SK-N-SH (cell line): ENCODE measurements at regions of chr19 and their contacts with region 1.

Region 1: GRCh38 chr19:55407800-55408532 is 378 bp upstream of the UBE2S start:
- DNase-seq: peak; percentile 98
- H3K4me3 ChIP-seq: peak overlapping the region; percentile 82 to 85
- H3K27ac ChIP-seq: peak overlapping the region; percentile 98
- H3K4me1 ChIP-seq: peaks cover 8 to 21% of the 10 kb centered on the region in 2 experiments; a peak in 3 of 4 replicates
- H3K27me3 ChIP-seq: no peaks in the 10 kb centered on the region
- CTCF ChIP-seq: no peak
- EP300 ChIP-seq: peak; percentile 18 to 37; a peak in 1 of 4 replicates
- RAD21 ChIP-seq: no peak

Region 2: DNA sequence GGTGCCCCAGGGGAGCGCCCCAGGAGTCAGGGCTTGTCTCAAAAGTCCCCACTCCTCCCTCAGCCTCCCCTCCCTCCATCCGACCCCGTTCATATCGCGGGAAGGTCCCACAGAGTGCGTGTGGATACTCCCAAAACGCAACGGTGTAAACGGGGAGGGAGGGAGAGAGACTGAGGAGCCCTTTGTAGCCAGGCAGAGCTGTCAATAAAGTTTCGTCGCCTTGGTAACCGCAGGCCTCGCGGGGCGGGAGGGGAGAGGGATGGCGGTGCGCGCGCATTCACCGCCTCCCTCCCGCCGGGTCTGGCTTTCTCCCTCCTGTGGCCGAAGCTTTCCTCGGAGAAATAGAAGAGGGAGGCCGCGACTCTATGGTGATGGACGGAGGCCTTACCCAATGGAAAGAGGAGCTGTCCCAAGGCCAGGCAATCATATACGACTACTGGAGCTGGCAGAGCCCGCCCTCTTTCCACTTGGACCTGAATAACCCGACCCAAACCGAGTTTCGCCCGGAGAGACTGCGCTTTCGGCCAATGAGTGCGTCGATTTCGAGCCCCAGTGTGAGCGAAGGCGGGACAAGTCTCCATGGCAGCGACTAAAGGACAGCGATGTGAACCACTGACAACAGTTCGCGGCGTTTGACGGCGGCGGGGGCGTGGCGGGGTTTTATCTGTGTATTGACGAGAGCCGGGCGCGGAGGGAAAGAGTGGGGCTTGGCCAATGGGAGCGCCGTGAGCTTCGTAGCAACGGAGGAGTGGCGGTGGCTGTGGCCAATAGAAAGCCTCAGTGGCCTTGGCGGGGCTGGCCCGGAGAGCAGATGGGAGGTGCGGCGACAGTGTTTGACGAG is 68.7 kb before region 1 on chr19 and contains the start of gene KMT5C:
- CTCF ChIA-PET with region 1: no interaction called
- POLR2A ChIA-PET with region 1: interaction called, 21 read pairs
- DNase-seq: peak; percentile 97
- H3K4me3 ChIP-seq: peak within 1 kb of the TSS; percentile 75
- H3K27ac ChIP-seq: peak within 1 kb of the TSS; percentile 97 to 98
- H3K4me1 ChIP-seq: peaks cover 0 to 29% of the 10 kb centered on the region in 2 experiments; a peak in 2 of 4 replicates
- H3K27me3 ChIP-seq: no peaks in the 10 kb centered on the region
- CTCF ChIP-seq: peak; percentile 33; the same call in 1 of the 2 replicates
- EP300 ChIP-seq: peak in 1 of 2 experiments; percentile 37; a peak in 1 of 4 replicates
- RAD21 ChIP-seq: peak; percentile 8; the same call in 1 of the 2 replicates
- polyA plus RNA-seq, gene KMT5C: 14.0 and 14.4 TPM in 2 replicates

Region 3: GRCh38 chr19:55385740-55386529 is 22.0 kb before region 1 on chr19 and contains the start of gene RPL28:
- CTCF ChIA-PET with region 1: interaction called, 4 read pairs
- POLR2A ChIA-PET with region 1: interaction called, 33 read pairs
- DNase-seq: peak; percentile 94
- H3K4me3 ChIP-seq: peak within 1 kb of the TSS; percentile 86 to 97
- H3K27ac ChIP-seq: peak within 1 kb of the TSS; percentile 98
- H3K4me1 ChIP-seq: peaks cover 25 to 51% of the 10 kb centered on the region in 2 experiments; a peak in 3 of 4 replicates
- H3K27me3 ChIP-seq: no peaks in the 10 kb centered on the region
- CTCF ChIP-seq: no peak
- EP300 ChIP-seq: no peak
- RAD21 ChIP-seq: no peak
- polyA plus RNA-seq, gene RPL28: 2,297 and 2,368 TPM in 2 replicates

Region 4: DNA sequence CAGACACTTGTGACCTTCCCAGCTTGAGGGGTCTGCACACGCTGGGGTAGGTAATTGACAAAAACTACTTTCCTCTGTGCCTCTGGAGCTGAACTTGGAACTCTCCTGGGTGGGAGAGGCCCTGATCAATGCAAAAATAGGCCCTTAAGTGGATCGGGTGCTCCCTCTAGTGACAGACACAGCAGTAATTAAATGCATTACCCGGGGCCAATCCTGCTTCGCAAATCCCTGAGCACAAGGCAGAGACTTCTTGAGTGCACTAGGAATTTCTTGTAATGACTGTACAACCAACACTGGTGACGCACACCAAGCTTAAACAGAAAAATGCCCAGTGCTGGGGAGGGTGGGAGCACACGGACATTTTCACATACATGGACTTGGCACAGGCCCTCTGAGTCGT is 10.2 kb after region 1 on chr19:
- CTCF ChIA-PET with region 1: interaction called, 18 read pairs
- POLR2A ChIA-PET with region 1: interaction called, 9 read pairs
- DNase-seq: peak; percentile 83
- H3K4me3 ChIP-seq: no peak overlapping the region; a peak in 1 of 4 replicates
- H3K27ac ChIP-seq: no peak overlapping the region
- H3K4me1 ChIP-seq: no peaks in the 10 kb centered on the region
- H3K27me3 ChIP-seq: no peaks in the 10 kb centered on the region
- CTCF ChIP-seq: peak; percentile 82
- EP300 ChIP-seq: no peak
- RAD21 ChIP-seq: peak; percentile 93

Region 5: GRCh38 chr19:55599468-55600279 is 191.7 kb after region 1 on chr19 and contains the start of gene FIZ1:
- CTCF ChIA-PET with region 1: no interaction called
- POLR2A ChIA-PET with region 1: interaction called, 11 read pairs
- DNase-seq: peak; percentile 89
- H3K4me3 ChIP-seq: peak within 1 kb of the TSS; percentile 67 to 91
- H3K27ac ChIP-seq: peak within 1 kb of the TSS; percentile 98 to 99
- H3K4me1 ChIP-seq: peaks cover 9 to 15% of the 10 kb centered on the region in 2 experiments; a peak in 3 of 4 replicates
- H3K27me3 ChIP-seq: no peaks in the 10 kb centered on the region
- CTCF ChIP-seq: no peak
- EP300 ChIP-seq: peak; percentile 21 to 36; a peak in 2 of 4 replicates
- RAD21 ChIP-seq: no peak
- polyA plus RNA-seq, gene FIZ1: 5.2 and 5.7 TPM in 2 replicates